Breast epithelium (tissue), 4 donors: ENCODE measurements at regions of chr20 and their contacts with region 1.

Region 1: GRCh38 chr20:49230561-49231193 is 11.5 kb downstream of the DDX27 start:
- DNase-seq: peak in 1 of 2 donors; percentile 74
- H3K4me3 ChIP-seq: no peak overlapping the region
- H3K27ac ChIP-seq: peak overlapping the region; percentile 6 to 67
- H3K4me1 ChIP-seq: no peaks in the 10 kb centered on the region
- H3K27me3 ChIP-seq: no peaks in the 10 kb centered on the region
- CTCF ChIP-seq: no peak
- POLR2A ChIP-seq: no peak

Region 2: DNA sequence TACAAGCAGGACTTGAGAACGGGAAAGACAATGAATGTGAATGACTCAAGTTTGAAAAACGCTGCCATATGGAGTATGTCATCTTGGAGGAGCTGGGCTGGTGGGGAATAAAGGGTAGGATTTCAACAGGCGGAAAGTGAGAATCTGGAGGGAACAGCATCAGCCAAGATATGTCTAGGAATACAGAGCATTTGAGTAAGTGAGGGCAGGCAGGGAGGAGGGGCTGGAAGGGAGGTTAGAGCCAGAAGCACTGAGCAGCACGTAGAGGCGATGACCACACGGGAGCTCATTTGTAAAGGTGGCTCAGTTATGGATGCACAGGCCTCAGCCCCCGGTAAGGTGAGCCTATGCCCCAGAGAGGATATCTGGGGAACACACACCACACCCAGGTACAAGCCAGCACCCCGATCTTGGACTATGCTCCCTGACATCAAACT is 1989.3 kb before region 1 on chr20:
- intact Hi-C with region 1: loop called (anchors 10 kb)
- DNase-seq: no peak
- H3K4me3 ChIP-seq: no peak overlapping the region
- H3K27ac ChIP-seq: no peak overlapping the region
- H3K4me1 ChIP-seq: no peaks in the 10 kb centered on the region
- H3K27me3 ChIP-seq: no peaks in the 10 kb centered on the region
- CTCF ChIP-seq: no peak
- POLR2A ChIP-seq: no peak

Region 3: GRCh38 chr20:47857566-47858471 is 1372.9 kb before region 1 on chr20:
- intact Hi-C with region 1: no loop called
- DNase-seq: peak in 1 of 2 donors; percentile 62
- H3K4me3 ChIP-seq: peak overlapping the region in 1 of 3 donors; percentile 22
- H3K27ac ChIP-seq: peak overlapping the region; percentile 68 to 74
- H3K4me1 ChIP-seq: peaks cover 0 to 5% of the 10 kb centered on the region in 2 donors
- H3K27me3 ChIP-seq: no peaks in the 10 kb centered on the region
- CTCF ChIP-seq: no peak
- POLR2A ChIP-seq: no peak

Region 4: GRCh38 chr20:49268600-49269365 is 38.1 kb after region 1 on chr20:
- intact Hi-C with region 1: no loop called
- DNase-seq: no peak
- H3K4me3 ChIP-seq: peak overlapping the region in 1 of 3 donors; percentile 13
- H3K27ac ChIP-seq: no peak overlapping the region
- H3K4me1 ChIP-seq: no peaks in the 10 kb centered on the region
- H3K27me3 ChIP-seq: no peaks in the 10 kb centered on the region
- CTCF ChIP-seq: no peak
- POLR2A ChIP-seq: no peak